Naive thymus-derived CD4-positive, alpha-beta T cell (primary cell): ENCODE measurements at regions of chr5 and their contacts with region 1.

Region 1: GRCh38 chr5:126198531-126198930 is 224.7 kb upstream of the GRAMD2B start:
- DNase-seq: no peak
- ATAC-seq: no peak
- H3K4me3 ChIP-seq: no peak overlapping the region
- H3K4me3 Mint-ChIP-seq: no peak overlapping the region
- H3K27ac ChIP-seq: no peak overlapping the region
- H3K27ac Mint-ChIP-seq: no peak overlapping the region
- H3K4me1 ChIP-seq: no peaks in the 10 kb centered on the region
- H3K4me1 Mint-ChIP-seq: no peaks in the 10 kb centered on the region
- H3K27me3 ChIP-seq: no peaks in the 10 kb centered on the region
- H3K27me3 Mint-ChIP-seq: peaks cover 0 to 7% (median 2%) of the 10 kb centered on the region in 5 donors

Region 2: GRCh38 chr5:125006011-125006685 is 1192.4 kb before region 1 on chr5:
- CTCF ChIA-PET with region 1: no interaction called
- POLR2A ChIA-PET with region 1: no interaction called
- intact Hi-C with region 1: no loop called
- DNase-seq: no peak
- ATAC-seq: no peak
- H3K4me3 ChIP-seq: no peak overlapping the region
- H3K4me3 Mint-ChIP-seq: no peak overlapping the region
- H3K27ac ChIP-seq: no peak overlapping the region
- H3K27ac Mint-ChIP-seq: no peak overlapping the region
- H3K4me1 ChIP-seq: no peaks in the 10 kb centered on the region
- H3K4me1 Mint-ChIP-seq: peaks cover 0 to 2% (median 0%) of the 10 kb centered on the region in 7 donors
- H3K27me3 ChIP-seq: no peaks in the 10 kb centered on the region
- H3K27me3 Mint-ChIP-seq: no peaks in the 10 kb centered on the region

Region 3: GRCh38 chr5:125190232-125191087 is 1008.1 kb before region 1 on chr5:
- CTCF ChIA-PET with region 1: no interaction called
- POLR2A ChIA-PET with region 1: no interaction called
- intact Hi-C with region 1: no loop called
- DNase-seq: no peak
- ATAC-seq: no peak
- H3K4me3 ChIP-seq: no peak overlapping the region
- H3K4me3 Mint-ChIP-seq: no peak overlapping the region
- H3K27ac ChIP-seq: no peak overlapping the region
- H3K27ac Mint-ChIP-seq: no peak overlapping the region
- H3K4me1 ChIP-seq: no peaks in the 10 kb centered on the region
- H3K4me1 Mint-ChIP-seq: peaks cover 0 to 3% (median 0%) of the 10 kb centered on the region in 7 donors
- H3K27me3 ChIP-seq: no peaks in the 10 kb centered on the region
- H3K27me3 Mint-ChIP-seq: peaks cover 0 to 4% (median 0%) of the 10 kb centered on the region in 5 donors

Region 4: GRCh38 chr5:126884269-126884819 is 685.8 kb after region 1 on chr5:
- CTCF ChIA-PET with region 1: no interaction called
- POLR2A ChIA-PET with region 1: no interaction called
- intact Hi-C with region 1: loop called in 1 of 2 experiments (anchors 10 kb)
- DNase-seq: no peak
- ATAC-seq: no peak
- H3K4me3 ChIP-seq: no peak overlapping the region
- H3K4me3 Mint-ChIP-seq: no peak overlapping the region
- H3K27ac ChIP-seq: no peak overlapping the region
- H3K27ac Mint-ChIP-seq: peak overlapping the region in 2 of 9 donors; percentile 16 to 29
- H3K4me1 ChIP-seq: no peaks in the 10 kb centered on the region
- H3K4me1 Mint-ChIP-seq: peaks cover 0 to 8% (median 3%) of the 10 kb centered on the region in 7 donors
- H3K27me3 ChIP-seq: no peaks in the 10 kb centered on the region
- H3K27me3 Mint-ChIP-seq: no peaks in the 10 kb centered on the region